ENCODE measurements at regions of chr6 and their contacts with region 1.

Region 1: DNA sequence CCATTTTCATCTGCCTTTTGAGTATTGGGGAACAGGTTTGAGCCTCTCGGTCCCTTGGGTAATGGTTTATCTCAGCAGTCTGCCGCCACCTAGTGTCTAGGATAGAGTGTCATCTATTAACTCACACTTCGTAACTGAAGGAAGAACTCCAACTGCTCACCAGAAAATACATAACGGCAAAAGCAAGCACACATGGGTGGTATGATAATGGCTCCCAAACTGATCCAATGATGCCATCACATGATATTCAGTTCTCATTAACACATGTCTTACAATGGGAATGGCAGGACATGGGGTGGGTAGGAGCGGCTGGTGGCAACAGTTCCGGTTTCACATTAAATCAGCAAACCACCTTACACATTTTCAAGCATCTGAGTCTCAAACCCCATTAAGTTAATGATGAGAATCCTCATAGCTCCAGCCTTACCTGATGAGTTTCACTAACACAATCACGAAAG is 110.7 kb upstream of the PHACTR1 start:
- DNase-seq: no peak
- CTCF ChIP-seq: peak; percentile 68

Region 2: GRCh38 chr6:11653028-11653583 is 952.8 kb before region 1 on chr6:
- in situ Hi-C with region 1: loop called (anchors 10 kb)
- DNase-seq: peak; percentile 55
- CTCF ChIP-seq: no peak

Region 3: GRCh38 chr6:12289933-12290820 is 315.7 kb before region 1 on chr6 and contains the start of gene EDN1:
- in situ Hi-C with region 1: loop called (anchors 10 kb)
- DNase-seq: peak; percentile 76
- CTCF ChIP-seq: peak; percentile 69

Region 4: DNA sequence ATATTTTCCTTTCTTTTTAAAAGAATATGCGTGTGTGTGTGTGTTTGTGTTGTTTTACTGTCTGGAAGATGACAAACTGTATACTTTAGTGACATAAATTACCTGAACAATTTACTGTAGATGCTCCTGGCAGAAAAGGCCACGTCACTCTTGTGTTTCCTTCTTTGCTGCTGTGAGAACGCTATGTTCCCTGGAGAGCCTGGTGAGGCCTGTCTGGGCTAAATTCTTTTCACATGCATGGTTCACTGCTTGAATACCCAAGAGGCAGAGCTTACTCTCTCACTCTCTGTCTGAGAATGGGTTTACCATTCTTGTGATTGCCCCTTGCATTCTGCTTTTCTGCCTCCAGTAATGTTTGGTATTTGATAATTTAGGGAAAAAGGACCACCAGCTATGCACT is 251.4 kb before region 1 on chr6:
- in situ Hi-C with region 1: loop called (anchors 10 kb)
- DNase-seq: no peak
- CTCF ChIP-seq: no peak